Naive thymus-derived CD4-positive, alpha-beta T cell (primary cell): ENCODE measurements at regions of chr5 and their contacts with region 1.

Region 1: GRCh38 chr5:149731639-149732323 is 1.7 kb downstream of the PPARGC1B start:
- DNase-seq: peak; percentile 52 to 84 (median 67)
- ATAC-seq: peak; percentile 64
- H3K4me3 ChIP-seq: peak overlapping the region; percentile 84
- H3K4me3 Mint-ChIP-seq: peak overlapping the region; percentile 77 to 92 (median 87)
- H3K27ac ChIP-seq: peak overlapping the region; percentile 67
- H3K27ac Mint-ChIP-seq: peak overlapping the region in 8 of 9 donors; percentile 38 to 93 (median 78)
- H3K4me1 ChIP-seq: no peaks in the 10 kb centered on the region
- H3K4me1 Mint-ChIP-seq: peaks cover 0 to 17% (median 8%) of the 10 kb centered on the region in 7 donors
- H3K27me3 ChIP-seq: no peaks in the 10 kb centered on the region
- H3K27me3 Mint-ChIP-seq: peaks cover 0 to 18% (median 0%) of the 10 kb centered on the region in 5 donors

Region 2: GRCh38 chr5:148805326-148806290 is 926.2 kb before region 1 on chr5:
- CTCF ChIA-PET with region 1: no interaction called
- POLR2A ChIA-PET with region 1: no interaction called
- intact Hi-C with region 1: loop called in 1 of 2 experiments (anchors 2 kb)
- DNase-seq: peak in 1 of 9 donors; percentile 39
- ATAC-seq: peak; percentile 4
- H3K4me3 ChIP-seq: no peak overlapping the region
- H3K4me3 Mint-ChIP-seq: no peak overlapping the region
- H3K27ac ChIP-seq: no peak overlapping the region
- H3K27ac Mint-ChIP-seq: peak overlapping the region in 4 of 9 donors; percentile 13 to 65 (median 28)
- H3K4me1 ChIP-seq: peaks cover 10 to 12% of the 10 kb centered on the region in 2 donors
- H3K4me1 Mint-ChIP-seq: peaks cover 20 to 35% (median 26%) of the 10 kb centered on the region in 7 donors
- H3K27me3 ChIP-seq: no peaks in the 10 kb centered on the region
- H3K27me3 Mint-ChIP-seq: peaks cover 0 to 5% (median 0%) of the 10 kb centered on the region in 5 donors

Region 3: DNA sequence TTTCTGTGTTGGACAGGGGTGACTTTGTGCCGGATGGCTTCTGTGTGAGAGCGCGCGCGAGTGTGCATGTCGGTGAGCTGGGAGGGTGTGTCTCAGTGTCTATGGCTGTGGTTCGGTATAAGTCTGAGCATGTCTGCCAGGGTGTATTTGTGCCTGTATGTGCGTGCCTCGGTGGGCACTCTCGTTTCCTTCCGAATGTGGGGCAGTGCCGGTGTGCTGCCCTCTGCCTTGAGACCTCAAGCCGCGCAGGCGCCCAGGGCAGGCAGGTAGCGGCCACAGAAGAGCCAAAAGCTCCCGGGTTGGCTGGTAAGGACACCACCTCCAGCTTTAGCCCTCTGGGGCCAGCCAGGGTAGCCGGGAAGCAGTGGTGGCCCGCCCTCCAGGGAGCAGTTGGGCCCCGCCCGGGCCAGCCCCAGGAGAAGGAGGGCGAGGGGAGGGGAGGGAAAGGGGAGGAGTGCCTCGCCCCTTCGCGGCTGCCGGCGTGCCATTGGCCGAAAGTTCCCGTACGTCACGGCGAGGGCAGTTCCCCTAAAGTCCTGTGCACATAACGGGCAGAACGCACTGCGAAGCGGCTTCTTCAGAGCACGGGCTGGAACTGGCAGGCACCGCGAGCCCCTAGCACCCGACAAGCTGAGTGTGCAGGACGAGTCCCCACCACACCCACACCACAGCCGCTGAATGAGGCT is 905.6 kb before region 1 on chr5 and contains the start of gene ADRB2:
- CTCF ChIA-PET with region 1: no interaction called
- POLR2A ChIA-PET with region 1: no interaction called
- intact Hi-C with region 1: loop called in 1 of 2 experiments (anchors 2 kb)
- DNase-seq: peak; percentile 74 to 83 (median 79)
- ATAC-seq: peak; percentile 94
- H3K4me3 ChIP-seq: peak within 1 kb of the TSS; percentile 75
- H3K4me3 Mint-ChIP-seq: peak within 1 kb of the TSS; percentile 83 to 94 (median 89)
- H3K27ac ChIP-seq: peak within 1 kb of the TSS; percentile 54
- H3K27ac Mint-ChIP-seq: peak within 1 kb of the TSS; percentile 16 to 82 (median 70)
- H3K4me1 ChIP-seq: peaks cover 7 to 18% of the 10 kb centered on the region in 2 donors
- H3K4me1 Mint-ChIP-seq: peaks cover 20 to 43% (median 31%) of the 10 kb centered on the region in 7 donors
- H3K27me3 ChIP-seq: no peaks in the 10 kb centered on the region
- H3K27me3 Mint-ChIP-seq: peaks cover 0 to 76% (median 5%) of the 10 kb centered on the region in 5 donors
- total RNA-seq, gene ADRB2: 0.36 to 14.4 (median 1.3) TPM

Region 4: GRCh38 chr5:149636851-149637246 is 94.9 kb before region 1 on chr5:
- CTCF ChIA-PET with region 1: no interaction called
- POLR2A ChIA-PET with region 1: no interaction called
- intact Hi-C with region 1: loop called in 1 of 2 experiments (anchors 2 kb)
- DNase-seq: peak in 7 of 9 donors; percentile 24 to 68 (median 43)
- ATAC-seq: peak; percentile 77
- H3K4me3 ChIP-seq: no peak overlapping the region
- H3K4me3 Mint-ChIP-seq: no peak overlapping the region
- H3K27ac ChIP-seq: no peak overlapping the region
- H3K27ac Mint-ChIP-seq: no peak overlapping the region
- H3K4me1 ChIP-seq: no peaks in the 10 kb centered on the region
- H3K4me1 Mint-ChIP-seq: peaks cover 0 to 8% (median 0%) of the 10 kb centered on the region in 7 donors
- H3K27me3 ChIP-seq: no peaks in the 10 kb centered on the region
- H3K27me3 Mint-ChIP-seq: peaks cover 0 to 3% (median 0%) of the 10 kb centered on the region in 5 donors

Region 5: DNA sequence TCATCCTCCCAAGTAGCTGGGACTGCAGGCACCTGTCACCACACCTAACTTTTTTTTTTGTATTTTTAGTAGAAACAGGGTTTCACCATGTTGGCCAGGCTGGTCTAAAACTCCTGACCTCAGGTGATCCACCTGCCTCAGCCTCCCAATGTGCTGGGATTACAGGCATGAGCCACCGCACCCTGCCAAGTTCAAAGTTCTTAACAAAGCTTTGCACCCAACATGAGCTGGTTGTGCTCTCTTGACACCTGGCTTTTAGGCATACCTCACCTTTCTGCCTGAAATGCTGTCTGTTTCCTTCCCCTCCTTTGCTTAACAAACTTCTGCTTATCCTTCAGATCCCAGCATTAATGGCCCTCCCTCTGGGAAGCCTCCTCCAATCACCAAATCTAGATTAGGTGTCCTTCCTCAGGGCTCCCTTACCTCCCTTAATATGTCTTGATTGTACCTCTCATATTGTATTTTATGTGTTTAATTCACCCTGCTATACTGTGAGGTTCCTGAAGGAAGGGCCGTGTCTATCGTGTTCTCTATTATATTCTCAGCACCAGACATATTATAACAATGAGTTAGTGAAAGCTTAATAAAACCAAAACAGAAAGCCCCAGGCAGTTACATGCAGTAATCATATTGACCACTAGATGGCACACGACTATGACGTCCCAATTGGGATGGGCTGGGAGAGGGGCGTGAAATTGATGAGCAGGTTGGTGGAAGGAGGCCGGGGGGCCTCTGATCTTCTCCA is 64.5 kb before region 1 on chr5:
- CTCF ChIA-PET with region 1: interaction called, 4 read pairs
- POLR2A ChIA-PET with region 1: no interaction called
- intact Hi-C with region 1: loop called in 1 of 2 experiments (anchors 1 kb)
- DNase-seq: no peak
- ATAC-seq: peak; percentile 57
- H3K4me3 ChIP-seq: no peak overlapping the region
- H3K4me3 Mint-ChIP-seq: no peak overlapping the region
- H3K27ac ChIP-seq: no peak overlapping the region
- H3K27ac Mint-ChIP-seq: no peak overlapping the region
- H3K4me1 ChIP-seq: no peaks in the 10 kb centered on the region
- H3K4me1 Mint-ChIP-seq: peaks cover 0 to 4% (median 0%) of the 10 kb centered on the region in 7 donors
- H3K27me3 ChIP-seq: no peaks in the 10 kb centered on the region
- H3K27me3 Mint-ChIP-seq: peaks cover 0 to 10% (median 4%) of the 10 kb centered on the region in 5 donors

Region 6: GRCh38 chr5:149828161-149828884 is 96.5 kb after region 1 on chr5:
- CTCF ChIA-PET with region 1: no interaction called
- POLR2A ChIA-PET with region 1: no interaction called
- intact Hi-C with region 1: loop called (anchors 1 to 5 kb)
- DNase-seq: peak; percentile 47 to 79 (median 72)
- ATAC-seq: peak; percentile 81
- H3K4me3 ChIP-seq: no peak overlapping the region
- H3K4me3 Mint-ChIP-seq: no peak overlapping the region
- H3K27ac ChIP-seq: no peak overlapping the region
- H3K27ac Mint-ChIP-seq: no peak overlapping the region
- H3K4me1 ChIP-seq: no peaks in the 10 kb centered on the region
- H3K4me1 Mint-ChIP-seq: peaks cover 0 to 10% (median 4%) of the 10 kb centered on the region in 7 donors
- H3K27me3 ChIP-seq: no peaks in the 10 kb centered on the region
- H3K27me3 Mint-ChIP-seq: no peaks in the 10 kb centered on the region

Region 7: GRCh38 chr5:150000256-150000989 is 268.6 kb after region 1 on chr5 and contains the starts of genes HMGXB3 and TIGD6:
- CTCF ChIA-PET with region 1: no interaction called
- POLR2A ChIA-PET with region 1: interaction called, 3 read pairs
- intact Hi-C with region 1: loop called (anchors 1 kb)
- DNase-seq: peak; percentile 64 to 87 (median 74)
- ATAC-seq: peak; percentile 83
- H3K4me3 ChIP-seq: peak within 1 kb of the TSS; percentile 76
- H3K4me3 Mint-ChIP-seq: peak within 1 kb of the TSS; percentile 86 to 99 (median 93)
- H3K27ac ChIP-seq: peak within 1 kb of the TSS; percentile 80
- H3K27ac Mint-ChIP-seq: peak within 1 kb of the TSS; percentile 75 to 98 (median 94)
- H3K4me1 ChIP-seq: peaks cover 18 to 23% of the 10 kb centered on the region in 2 donors
- H3K4me1 Mint-ChIP-seq: peaks cover 33 to 55% (median 46%) of the 10 kb centered on the region in 7 donors
- H3K27me3 ChIP-seq: no peaks in the 10 kb centered on the region
- H3K27me3 Mint-ChIP-seq: no peaks in the 10 kb centered on the region
- total RNA-seq, gene HMGXB3: 27.2 to 40.6 (median 34.5) TPM
- total RNA-seq, gene TIGD6: 2.3 to 7.4 (median 2.8) TPM